ENCODE measurements at regions of chr6 and their contacts with region 1.

Region 1: DNA sequence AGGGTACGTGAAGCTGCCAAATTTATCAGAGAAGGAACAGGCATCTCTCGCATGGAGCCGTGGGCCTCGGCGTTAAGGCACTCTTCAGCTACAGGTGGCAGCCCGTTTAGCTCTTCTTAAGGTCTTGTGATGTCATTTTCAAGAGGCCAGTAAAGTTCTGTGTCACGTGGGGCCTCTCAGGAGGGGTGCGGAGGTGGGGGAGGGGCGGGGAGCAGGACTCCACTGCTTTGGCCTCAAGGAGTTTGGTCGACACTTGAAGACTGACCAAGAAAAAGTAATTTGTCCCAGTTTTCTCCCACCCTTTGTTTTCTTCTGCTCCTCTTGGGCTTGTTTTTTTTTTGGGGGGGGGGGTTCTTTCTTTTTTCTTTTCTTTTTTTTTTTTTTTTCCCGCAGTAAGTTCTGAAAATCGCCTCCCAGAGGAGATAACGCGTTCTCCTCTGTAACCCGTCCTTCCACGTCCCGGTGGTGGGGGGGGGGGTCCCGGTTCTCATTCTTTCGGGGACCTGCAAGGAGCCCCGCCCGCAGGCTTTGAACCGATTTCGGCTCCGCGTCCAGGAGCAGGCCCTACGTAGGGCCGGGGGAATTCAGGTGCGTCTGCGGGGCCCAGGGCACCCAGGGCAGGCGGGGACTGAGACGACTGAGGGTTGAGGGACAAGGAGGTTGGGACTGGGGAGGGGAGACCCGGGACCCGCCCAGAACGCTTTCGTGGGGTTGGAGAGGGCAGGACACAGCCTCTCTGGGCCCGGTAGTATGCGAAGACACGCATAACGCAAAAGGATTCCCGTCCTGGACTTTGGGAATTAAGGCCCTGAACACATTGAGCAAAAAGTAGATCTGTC is 26.0 kb downstream of the GPX6 start:
- DNase-seq: peak; percentile 58
- H3K4me3 ChIP-seq: peak overlapping the region; percentile 48 to 97 (median 82)
- H3K27ac ChIP-seq: no peak overlapping the region
- H3K4me1 ChIP-seq: peaks cover 6% of the 10 kb centered on the region
- H3K27me3 ChIP-seq: peaks cover 5 to 10% of the 10 kb centered on the region in 2 experiments
- CTCF ChIP-seq: no peak
- POLR2A ChIP-seq: no peak

Region 2: GRCh38 chr6:27617700-27618689 is 871.6 kb before region 1 on chr6:
- CTCF ChIA-PET with region 1: no interaction called
- POLR2A ChIA-PET with region 1: no interaction called
- dilution Hi-C with region 1: no loop called
- intact Hi-C with region 1: no loop called
- DNase-seq: peak; percentile 40
- H3K4me3 ChIP-seq: peak overlapping the region; percentile 20 to 68 (median 55)
- H3K27ac ChIP-seq: no peak overlapping the region
- H3K4me1 ChIP-seq: peaks cover 7% of the 10 kb centered on the region
- H3K27me3 ChIP-seq: peaks cover 0 to 7% of the 10 kb centered on the region in 2 experiments
- CTCF ChIP-seq: no peak
- POLR2A ChIP-seq: no peak

Region 3: GRCh38 chr6:27902335-27903314 is 587.0 kb before region 1 on chr6:
- CTCF ChIA-PET with region 1: no interaction called
- POLR2A ChIA-PET with region 1: no interaction called
- dilution Hi-C with region 1: no loop called
- intact Hi-C with region 1: loop called (anchors 2 kb)
- DNase-seq: peak; percentile 92
- H3K4me3 ChIP-seq: peak overlapping the region; percentile 39 to 91 (median 86)
- H3K27ac ChIP-seq: peak overlapping the region; percentile 37
- H3K4me1 ChIP-seq: no peaks in the 10 kb centered on the region
- H3K27me3 ChIP-seq: peaks cover 0 to 11% of the 10 kb centered on the region in 2 experiments
- CTCF ChIP-seq: no peak
- POLR2A ChIP-seq: no peak

Region 4: DNA sequence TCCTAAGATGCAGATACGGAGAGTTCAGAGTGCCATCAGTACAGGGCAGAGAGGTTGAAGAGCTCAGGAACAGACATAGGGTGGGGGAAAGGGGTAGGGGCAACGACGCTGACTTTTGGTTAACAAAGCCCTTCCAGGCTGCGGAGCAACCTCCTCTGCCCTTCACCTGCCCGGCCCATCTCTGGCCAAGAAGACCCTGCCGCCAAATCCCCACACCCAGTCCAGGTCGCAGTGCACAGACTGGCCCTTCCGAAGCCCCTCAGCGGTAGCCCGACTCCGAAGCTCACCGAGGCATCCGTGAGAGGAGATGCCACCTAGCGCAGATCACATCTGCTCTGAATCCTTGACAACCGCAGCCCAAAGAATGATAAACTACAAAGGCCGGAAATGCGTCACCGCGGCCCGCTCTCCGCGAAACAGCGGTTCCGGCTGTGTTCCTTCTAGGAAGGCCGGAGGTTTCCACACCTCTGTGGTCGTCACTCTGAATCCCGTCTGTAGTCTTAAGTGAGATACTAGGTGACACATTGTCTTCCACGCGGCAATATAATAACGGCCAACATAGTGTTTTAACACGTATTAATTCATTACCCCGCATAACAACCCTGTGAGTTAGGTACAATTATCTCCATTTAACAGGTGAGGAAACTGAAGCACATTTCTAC is 46.3 kb before region 1 on chr6 and contains the start of gene ZSCAN23:
- CTCF ChIA-PET with region 1: no interaction called
- POLR2A ChIA-PET with region 1: no interaction called
- dilution Hi-C with region 1: no loop called
- intact Hi-C with region 1: loop called (anchors 1 kb)
- DNase-seq: peak; percentile 76
- H3K4me3 ChIP-seq: peak within 1 kb of the TSS; percentile 58 to 79 (median 63)
- H3K27ac ChIP-seq: no peak within 1 kb of the TSS
- H3K4me1 ChIP-seq: no peaks in the 10 kb centered on the region
- H3K27me3 ChIP-seq: peaks cover 5 to 12% of the 10 kb centered on the region in 2 experiments
- CTCF ChIP-seq: no peak
- POLR2A ChIP-seq: peak; percentile 28
- total RNA-seq, gene ZSCAN23: 1.6 and 1.7 TPM in 2 replicates

Region 5: DNA sequence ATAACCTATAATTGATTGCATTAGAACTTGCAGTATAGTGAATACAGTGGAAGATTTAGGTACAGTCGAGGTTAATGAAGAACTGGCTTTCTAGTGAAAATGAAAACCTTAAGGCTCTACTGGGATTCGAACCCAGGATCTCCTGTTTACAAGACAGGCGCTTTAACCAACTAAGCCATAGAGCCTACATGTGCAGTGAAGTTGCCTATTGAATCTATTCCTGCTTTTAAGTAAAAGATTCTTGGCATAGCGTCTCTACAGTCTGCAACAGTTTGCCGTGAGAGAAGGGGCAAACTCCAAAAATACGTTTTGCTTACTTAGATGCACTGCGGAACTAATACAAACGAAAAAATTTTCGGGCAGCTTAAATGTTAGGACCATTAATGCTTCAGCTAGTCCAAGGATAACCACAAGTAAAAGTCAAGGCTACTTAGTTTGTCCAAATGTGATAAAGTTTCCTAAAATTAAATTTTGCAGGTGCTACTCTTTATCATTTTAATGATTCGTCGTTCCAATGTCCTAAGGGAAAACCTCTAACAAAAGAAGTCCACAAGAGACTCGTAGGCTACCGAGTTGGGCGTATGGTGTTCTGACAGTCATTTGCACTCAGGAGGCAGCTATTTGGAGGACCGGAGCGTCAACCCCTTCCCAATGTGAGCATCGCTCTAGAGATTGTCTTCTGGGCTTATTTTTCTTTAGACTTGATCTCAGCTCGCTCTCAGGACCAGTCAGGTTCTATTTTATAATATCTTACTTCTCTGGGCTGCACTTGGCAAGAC is 15.0 kb before region 1 on chr6:
- CTCF ChIA-PET with region 1: interaction called, 3 read pairs
- POLR2A ChIA-PET with region 1: no interaction called
- dilution Hi-C with region 1: no loop called
- intact Hi-C with region 1: loop called (anchors 1 kb)
- DNase-seq: peak; percentile 72
- H3K4me3 ChIP-seq: peak overlapping the region; percentile 1 to 72 (median 66)
- H3K27ac ChIP-seq: no peak overlapping the region
- H3K4me1 ChIP-seq: peaks cover 4% of the 10 kb centered on the region
- H3K27me3 ChIP-seq: peaks cover 13 to 39% of the 10 kb centered on the region in 2 experiments
- CTCF ChIP-seq: no peak
- POLR2A ChIP-seq: no peak

Region 6: DNA sequence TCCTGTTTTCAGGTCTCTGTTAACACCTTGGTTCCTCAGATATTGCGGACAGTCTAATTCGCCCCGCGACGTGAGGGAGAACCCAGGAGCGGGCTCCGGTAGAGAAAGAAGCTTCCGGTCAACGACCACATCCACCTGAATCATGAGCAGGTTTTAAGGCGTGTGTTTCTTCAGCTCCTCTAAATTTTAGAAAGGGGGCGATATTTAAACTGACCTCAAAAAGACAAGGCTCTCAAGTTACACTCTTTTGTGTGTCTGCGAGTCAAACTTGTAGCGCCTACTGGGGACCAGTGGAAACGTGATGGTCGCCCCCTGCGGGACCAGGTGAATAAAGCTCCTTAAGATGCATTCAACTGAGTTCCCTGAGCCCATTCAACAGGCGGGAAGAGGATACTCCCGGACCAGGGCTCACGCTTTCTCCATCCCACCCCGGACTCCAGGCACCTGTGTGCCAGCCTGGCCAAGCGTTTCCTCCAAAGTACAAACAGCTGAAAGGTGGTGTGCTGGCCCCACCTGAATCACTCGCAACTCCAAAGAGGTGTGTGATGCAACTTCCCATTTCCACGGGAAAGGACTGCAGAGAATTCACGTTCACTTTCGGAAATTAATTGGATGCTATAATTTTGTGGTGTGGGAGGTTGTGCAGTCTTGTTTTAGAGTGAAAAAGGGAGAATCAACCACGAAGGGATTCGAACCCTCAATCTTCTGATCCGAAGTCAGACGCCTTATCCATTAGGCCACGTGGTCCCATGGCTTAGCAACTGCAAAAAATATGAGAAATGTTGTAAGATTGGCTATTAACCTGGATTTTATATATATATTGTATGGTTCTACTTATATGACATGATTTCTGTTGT is 53.1 kb after region 1 on chr6:
- CTCF ChIA-PET with region 1: no interaction called
- POLR2A ChIA-PET with region 1: no interaction called
- dilution Hi-C with region 1: no loop called
- intact Hi-C with region 1: loop called (anchors 2 kb)
- DNase-seq: peak; percentile 70
- H3K4me3 ChIP-seq: no peak overlapping the region
- H3K27ac ChIP-seq: no peak overlapping the region
- H3K4me1 ChIP-seq: peaks cover 13% of the 10 kb centered on the region
- H3K27me3 ChIP-seq: peaks cover 0 to under 1% of the 10 kb centered on the region in 2 experiments
- CTCF ChIP-seq: peak in 1 of 2 donors; percentile 33
- POLR2A ChIP-seq: no peak